ENCODE measurements at regions of chr16 and their contacts with region 1.

Region 1: DNA sequence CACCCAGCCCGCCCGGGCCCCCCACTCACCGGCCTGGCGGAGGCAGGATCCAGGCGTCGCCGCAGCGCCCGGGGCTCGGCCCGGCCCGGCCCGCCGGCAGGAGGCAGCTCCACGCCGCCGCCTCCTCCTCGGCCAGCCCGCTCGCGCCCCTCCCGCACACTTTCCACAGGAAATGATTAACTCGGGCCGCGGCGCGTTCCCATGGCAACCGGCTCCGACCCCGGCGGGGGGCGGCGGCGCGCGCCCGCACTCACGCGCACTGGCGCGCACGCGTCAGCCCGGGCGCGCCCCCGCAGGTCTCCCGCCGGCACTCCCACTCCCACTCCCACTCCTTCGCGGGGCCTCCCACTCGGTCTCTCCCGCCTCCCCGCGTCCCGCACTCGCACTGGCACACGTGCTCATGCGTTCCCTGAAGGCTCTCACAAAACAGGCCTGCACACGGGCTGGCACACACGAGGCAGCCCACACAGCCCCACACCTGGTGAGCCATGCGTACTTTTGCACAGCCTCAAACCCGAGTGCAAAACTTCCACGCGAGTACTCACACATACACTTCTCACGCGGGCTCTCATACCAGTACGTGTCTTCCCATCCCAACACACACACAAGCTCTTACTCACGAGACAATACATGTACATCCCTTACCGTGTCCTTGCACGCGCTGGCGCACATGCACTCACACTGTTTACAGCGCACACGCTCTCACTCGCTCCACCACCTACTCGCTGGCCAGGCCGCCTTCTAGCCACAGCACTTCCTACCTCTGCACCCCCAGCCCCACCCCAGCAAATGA is at the start of gene KIFC3:
- DNase-seq: peak; percentile 61 to 79 (median 73)
- H3K4me3 ChIP-seq: peak within 1 kb of the TSS in 2 of 3 experiments; percentile 25 to 56
- H3K4me3 Mint-ChIP-seq: peak within 1 kb of the TSS; percentile 75 to 96
- H3K27ac ChIP-seq: no peak within 1 kb of the TSS
- H3K27ac Mint-ChIP-seq: peak within 1 kb of the TSS in 6 of 7 donors; percentile 32 to 84 (median 66)
- H3K4me1 ChIP-seq: peaks cover 36 to 40% of the 10 kb centered on the region in 2 donors
- H3K4me1 Mint-ChIP-seq: peaks cover 40% of the 10 kb centered on the region
- H3K27me3 ChIP-seq: peaks cover 23 to 55% of the 10 kb centered on the region in 2 donors
- H3K27me3 Mint-ChIP-seq: peaks cover 42 to 76% (median 63%) of the 10 kb centered on the region in 3 donors
- CTCF ChIP-seq: no peak
- polyA plus RNA-seq, gene KIFC3: 0.24 to 1.7 TPM in 2 of 3 donors, not detected in the other

Region 2: DNA sequence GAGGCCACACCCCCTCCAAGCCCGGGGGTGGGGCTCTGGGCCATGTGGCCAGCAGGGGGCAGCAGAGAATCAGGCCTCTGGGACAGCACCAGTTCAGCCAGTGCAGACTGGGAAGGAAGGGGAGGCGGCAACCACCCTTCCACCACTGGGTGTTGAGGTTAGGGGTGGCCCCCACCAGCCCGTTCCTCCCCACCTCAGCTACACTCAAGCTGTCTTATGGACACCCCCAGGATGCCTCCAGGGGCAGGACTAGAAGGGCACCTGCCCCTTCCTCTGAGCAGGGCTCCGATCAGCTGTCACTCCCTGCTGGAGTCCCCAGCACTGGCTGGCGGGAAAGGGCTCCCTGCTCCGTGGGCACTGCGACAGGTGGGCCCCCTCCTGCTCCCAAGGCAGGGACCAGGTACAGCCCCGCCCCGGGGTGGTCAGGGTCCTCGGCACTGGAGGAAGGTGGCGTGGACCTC is 45.2 kb before region 1 on chr16:
- intact Hi-C with region 1: no loop called
- DNase-seq: peak; percentile 76 to 77 (median 77)
- H3K4me3 ChIP-seq: no peak overlapping the region
- H3K4me3 Mint-ChIP-seq: no peak overlapping the region
- H3K27ac ChIP-seq: no peak overlapping the region
- H3K27ac Mint-ChIP-seq: no peak overlapping the region
- H3K4me1 ChIP-seq: no peaks in the 10 kb centered on the region
- H3K4me1 Mint-ChIP-seq: no peaks in the 10 kb centered on the region
- H3K27me3 ChIP-seq: no peaks in the 10 kb centered on the region
- H3K27me3 Mint-ChIP-seq: peaks cover 0 to 6% (median 2%) of the 10 kb centered on the region in 3 donors
- CTCF ChIP-seq: peak; percentile 94

Region 3: DNA sequence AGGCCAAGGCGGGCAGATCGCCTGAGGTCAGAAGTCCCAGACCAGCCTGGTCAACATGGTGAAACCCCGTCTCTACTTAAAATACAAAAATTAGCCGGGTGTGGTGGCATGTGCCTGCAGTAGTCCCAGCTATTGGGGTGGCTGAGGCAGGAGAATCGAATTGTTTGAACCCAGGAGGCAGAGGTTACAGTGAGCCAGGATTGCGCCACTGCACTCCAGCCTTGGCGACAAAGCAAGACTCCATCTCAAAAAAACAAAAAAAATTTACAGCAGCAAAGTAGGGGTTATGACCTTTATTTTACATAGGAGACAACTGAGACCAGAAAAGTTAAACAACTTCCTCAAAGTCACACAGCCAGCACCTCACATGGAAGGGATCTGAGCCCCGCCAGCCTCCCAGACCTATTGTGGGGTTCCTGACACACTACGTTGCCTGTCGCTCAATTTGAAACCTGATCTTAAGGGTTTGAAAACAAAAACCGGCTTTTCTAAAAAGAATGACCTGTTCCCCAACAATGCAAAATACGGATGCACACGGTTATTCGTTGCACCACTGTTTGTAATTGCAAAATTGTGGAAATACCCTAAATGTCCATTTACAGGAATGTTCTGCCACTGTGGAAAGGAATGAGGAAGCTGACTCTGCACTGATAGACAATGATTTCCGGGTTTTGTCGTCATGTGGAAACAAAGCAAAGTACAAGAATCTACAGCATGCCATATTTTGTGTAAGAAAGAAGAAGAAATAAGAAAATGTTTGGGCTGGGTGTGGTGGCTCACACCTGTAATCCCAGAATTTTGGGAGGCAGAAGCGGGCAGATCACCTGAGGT is 91.2 kb after region 1 on chr16:
- intact Hi-C with region 1: loop called in 1 of 2 experiments (anchors 5 kb)
- DNase-seq: peak; percentile 93 to 97 (median 96)
- H3K4me3 ChIP-seq: peak overlapping the region in 1 of 3 experiments; percentile 60
- H3K4me3 Mint-ChIP-seq: peak overlapping the region; percentile 28 to 88
- H3K27ac ChIP-seq: peak overlapping the region; percentile 85 to 98
- H3K27ac Mint-ChIP-seq: peak overlapping the region; percentile 92 to 98 (median 96)
- H3K4me1 ChIP-seq: peaks cover 49 to 53% of the 10 kb centered on the region in 2 donors
- H3K4me1 Mint-ChIP-seq: peaks cover 58% of the 10 kb centered on the region
- H3K27me3 ChIP-seq: no peaks in the 10 kb centered on the region
- H3K27me3 Mint-ChIP-seq: peaks cover 0 to 2% (median 0%) of the 10 kb centered on the region in 3 donors
- CTCF ChIP-seq: no peak

Region 4: DNA sequence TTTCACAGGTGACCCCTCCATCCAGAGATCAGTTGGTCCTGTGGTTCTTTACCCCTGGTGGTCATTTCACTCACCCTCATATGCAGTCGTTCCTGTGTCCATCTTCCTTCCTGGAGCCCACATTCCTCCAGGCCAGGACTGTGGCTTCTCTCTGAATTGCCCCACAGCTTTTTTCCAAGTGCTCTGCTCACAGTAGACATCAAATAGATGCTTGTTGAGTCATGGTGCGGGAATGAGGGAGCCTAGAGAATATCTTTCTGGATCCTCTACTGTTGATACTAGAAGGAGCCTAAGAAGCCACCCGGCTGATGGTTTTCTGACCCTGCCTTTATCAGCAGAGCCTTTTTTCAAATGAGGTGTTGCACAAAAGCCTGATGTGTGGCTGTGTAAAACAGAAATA is 209.1 kb after region 1 on chr16:
- intact Hi-C with region 1: loop called (anchors 5 to 10 kb)
- DNase-seq: no peak
- H3K4me3 ChIP-seq: no peak overlapping the region
- H3K4me3 Mint-ChIP-seq: no peak overlapping the region
- H3K27ac ChIP-seq: no peak overlapping the region
- H3K27ac Mint-ChIP-seq: peak overlapping the region in 1 of 7 donors; percentile 9
- H3K4me1 ChIP-seq: no peaks in the 10 kb centered on the region
- H3K4me1 Mint-ChIP-seq: peaks cover 4% of the 10 kb centered on the region
- H3K27me3 ChIP-seq: no peaks in the 10 kb centered on the region
- H3K27me3 Mint-ChIP-seq: peaks cover 0 to 1% (median 0%) of the 10 kb centered on the region in 3 donors
- CTCF ChIP-seq: no peak

Measured in CD14-positive monocyte (primary cell).